ENCODE measurements at regions of chr12 and their contacts with region 1.

Region 1: DNA sequence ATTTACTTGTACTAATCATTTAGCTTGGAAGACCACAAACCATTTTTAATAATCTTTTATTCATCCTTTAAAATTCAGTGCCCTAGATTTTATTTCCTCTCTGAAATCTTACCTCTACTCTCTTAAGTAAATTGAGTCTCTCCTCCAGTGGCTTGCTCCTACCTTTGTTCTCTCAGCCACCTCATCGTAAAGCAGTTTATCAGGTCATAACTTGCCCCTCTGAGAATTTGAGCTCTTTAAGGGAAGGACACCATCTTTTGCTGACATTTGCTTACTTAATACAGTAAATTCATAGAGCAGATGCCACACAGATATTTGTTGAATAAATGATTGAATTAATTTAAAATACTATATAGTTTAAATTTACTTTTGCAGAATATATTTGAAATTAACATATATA is 794.3 kb downstream of the C12orf50 start:
- DNase-seq: no peak
- H3K4me3 ChIP-seq: no peak overlapping the region
- H3K27ac ChIP-seq: no peak overlapping the region
- H3K4me1 ChIP-seq: no peaks in the 10 kb centered on the region
- H3K27me3 ChIP-seq: no peaks in the 10 kb centered on the region
- CTCF ChIP-seq: no peak
- POLR2A ChIP-seq: no peak

Region 2: GRCh38 chr12:87793131-87793530 is 558.2 kb after region 1 on chr12:
- intact Hi-C with region 1: loop called (anchors 5 kb)
- DNase-seq: no peak
- H3K4me3 ChIP-seq: no peak overlapping the region
- H3K27ac ChIP-seq: no peak overlapping the region
- H3K4me1 ChIP-seq: no peaks in the 10 kb centered on the region
- H3K27me3 ChIP-seq: no peaks in the 10 kb centered on the region
- CTCF ChIP-seq: no peak
- POLR2A ChIP-seq: no peak

Measured in breast epithelium (tissue), 4 donors.